Activated CD4-positive, alpha-beta memory T cell treated with anti-CD3 and anti-CD28 coated beads for 36 hours (primary cell): ENCODE measurements at regions of chr17 and their contacts with region 1.

Region 1: GRCh38 chr17:28967221-28968140 is 16.2 kb upstream of the PHF12 start:
- DNase-seq: no peak
- H3K4me3 Mint-ChIP-seq: no peak overlapping the region
- H3K27ac Mint-ChIP-seq: no peak overlapping the region
- H3K4me1 Mint-ChIP-seq: no peaks in the 10 kb centered on the region
- H3K27me3 Mint-ChIP-seq: peaks cover 13% of the 10 kb centered on the region

Region 2: DNA sequence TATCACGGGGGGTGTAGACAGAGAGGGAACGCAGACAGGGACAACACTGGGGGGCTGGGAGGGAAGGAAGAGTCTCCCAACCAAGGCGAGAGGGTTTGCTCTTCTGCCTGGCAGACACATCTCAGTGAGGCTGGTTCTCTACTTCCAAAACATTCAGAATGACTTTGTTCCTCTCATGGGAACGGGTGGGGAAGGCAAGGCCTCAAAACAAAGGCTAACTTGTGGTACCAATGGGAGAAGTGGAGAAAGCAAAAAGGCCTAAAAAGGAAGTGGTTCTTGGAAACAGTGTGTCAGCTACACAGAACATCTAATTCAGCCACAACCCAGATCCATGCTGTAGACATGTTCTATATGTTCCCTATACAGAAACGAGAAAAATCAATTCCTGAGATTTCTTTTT is 77.5 kb before region 1 on chr17:
- CTCF ChIA-PET with region 1: no interaction called
- POLR2A ChIA-PET with region 1: no interaction called
- intact Hi-C with region 1: no loop called
- DNase-seq: no peak
- H3K4me3 Mint-ChIP-seq: no peak overlapping the region
- H3K27ac Mint-ChIP-seq: peak overlapping the region; percentile 77
- H3K4me1 Mint-ChIP-seq: peaks cover 43% of the 10 kb centered on the region
- H3K27me3 Mint-ChIP-seq: no peaks in the 10 kb centered on the region

Region 3: GRCh38 chr17:29054835-29055234 is 87.4 kb after region 1 on chr17:
- CTCF ChIA-PET with region 1: interaction called, 12 read pairs
- POLR2A ChIA-PET with region 1: no interaction called
- intact Hi-C with region 1: no loop called
- DNase-seq: no peak
- H3K4me3 Mint-ChIP-seq: no peak overlapping the region
- H3K27ac Mint-ChIP-seq: no peak overlapping the region
- H3K4me1 Mint-ChIP-seq: no peaks in the 10 kb centered on the region
- H3K27me3 Mint-ChIP-seq: no peaks in the 10 kb centered on the region

Region 4: GRCh38 chr17:29063992-29064391 is 96.5 kb after region 1 on chr17:
- CTCF ChIA-PET with region 1: interaction called, 12 read pairs
- POLR2A ChIA-PET with region 1: no interaction called
- intact Hi-C with region 1: no loop called
- DNase-seq: no peak
- H3K4me3 Mint-ChIP-seq: no peak overlapping the region
- H3K27ac Mint-ChIP-seq: no peak overlapping the region
- H3K4me1 Mint-ChIP-seq: peaks cover 2% of the 10 kb centered on the region
- H3K27me3 Mint-ChIP-seq: no peaks in the 10 kb centered on the region

Region 5: DNA sequence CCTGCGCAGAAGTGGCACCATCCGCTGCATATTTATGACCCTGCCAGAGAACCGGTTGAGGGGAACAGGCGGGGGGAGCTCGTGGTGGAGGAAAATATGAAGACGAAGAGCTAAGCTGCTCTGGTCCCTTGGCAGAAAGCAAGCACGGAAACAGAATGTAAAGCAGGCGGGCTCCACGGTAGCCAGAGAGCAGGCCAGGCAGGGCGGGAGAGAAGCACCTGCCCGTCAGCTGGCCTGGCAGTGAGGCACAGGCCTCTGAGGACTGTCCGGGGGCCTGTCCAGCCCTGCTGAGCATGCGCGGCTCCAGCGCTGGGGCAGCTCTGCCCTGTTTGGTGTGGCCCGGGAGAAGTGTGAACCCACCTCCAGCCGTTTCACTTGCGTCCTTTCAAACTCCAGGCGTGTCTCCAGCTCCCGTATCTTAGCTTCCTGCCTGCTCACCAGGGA is 122.1 kb after region 1 on chr17:
- CTCF ChIA-PET with region 1: interaction called, 17 read pairs
- POLR2A ChIA-PET with region 1: no interaction called
- intact Hi-C with region 1: no loop called
- DNase-seq: no peak
- H3K4me3 Mint-ChIP-seq: no peak overlapping the region
- H3K27ac Mint-ChIP-seq: no peak overlapping the region
- H3K4me1 Mint-ChIP-seq: no peaks in the 10 kb centered on the region
- H3K27me3 Mint-ChIP-seq: no peaks in the 10 kb centered on the region

Region 6: GRCh38 chr17:29111816-29112499 is 144.5 kb after region 1 on chr17:
- CTCF ChIA-PET with region 1: interaction called, 475 read pairs
- POLR2A ChIA-PET with region 1: no interaction called
- intact Hi-C with region 1: loop called (anchors 1 kb)
- DNase-seq: peak; percentile 80
- H3K4me3 Mint-ChIP-seq: no peak overlapping the region
- H3K27ac Mint-ChIP-seq: no peak overlapping the region
- H3K4me1 Mint-ChIP-seq: peaks cover 2% of the 10 kb centered on the region
- H3K27me3 Mint-ChIP-seq: no peaks in the 10 kb centered on the region